Activated CD4-positive, alpha-beta memory T cell treated with anti-CD3 and anti-CD28 coated beads for 36 hours (primary cell): ENCODE measurements at regions of chr16 and their contacts with region 1.

Region 1: GRCh38 chr16:69112285-69113129 is 7.1 kb downstream of the HAS3 start:
- DNase-seq: peak; percentile 69
- H3K4me3 Mint-ChIP-seq: no peak overlapping the region
- H3K27ac Mint-ChIP-seq: no peak overlapping the region
- H3K4me1 Mint-ChIP-seq: peaks cover 3% of the 10 kb centered on the region
- H3K27me3 Mint-ChIP-seq: peaks cover 13% of the 10 kb centered on the region

Region 2: DNA sequence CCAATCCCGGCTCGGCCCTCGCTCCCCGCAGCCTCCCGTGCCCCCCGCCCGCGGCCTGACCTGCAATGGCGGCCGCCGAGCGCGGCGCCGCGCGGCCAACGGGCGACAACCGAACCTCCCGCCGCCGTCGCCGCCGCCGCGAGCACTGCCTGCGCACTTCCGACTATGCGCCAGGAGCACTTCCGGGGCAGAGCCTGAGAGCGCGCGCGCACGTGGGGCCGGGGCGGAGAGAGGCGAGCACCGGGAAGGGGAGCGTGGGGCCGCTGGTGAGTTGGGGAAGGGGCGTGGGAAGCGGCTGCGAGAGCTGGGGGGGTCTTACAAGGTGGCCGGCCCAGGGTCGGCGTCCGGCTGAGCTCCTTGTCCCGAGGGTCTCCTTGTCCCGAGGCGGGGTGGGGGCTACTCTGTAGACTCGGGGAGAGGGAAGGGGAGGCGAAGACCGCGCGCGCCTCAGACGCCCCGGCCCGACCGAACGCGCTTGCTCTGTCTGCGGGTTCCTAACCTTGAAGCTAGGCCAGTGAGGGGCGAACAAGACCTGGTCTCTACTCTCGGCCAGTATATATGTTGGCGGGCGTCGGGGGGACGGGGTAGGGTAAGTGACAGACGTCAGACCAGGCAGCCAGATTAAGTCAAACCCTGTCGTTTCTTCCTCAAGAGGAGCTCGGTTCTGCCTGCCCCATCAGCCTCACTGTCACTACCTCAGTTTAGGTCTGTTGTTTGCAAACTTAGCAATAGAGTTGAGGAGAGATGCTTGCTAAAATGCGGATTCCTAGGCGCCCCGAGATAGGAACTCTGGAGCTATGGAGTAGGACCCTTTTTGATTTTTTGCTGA is 20.1 kb after region 1 on chr16 and contains the starts of genes CHTF8 and UTP4:
- CTCF ChIA-PET with region 1: interaction called, 11 read pairs
- POLR2A ChIA-PET with region 1: no interaction called
- intact Hi-C with region 1: no loop called
- DNase-seq: peak; percentile 91
- H3K4me3 Mint-ChIP-seq: peak within 1 kb of the TSS; percentile 97
- H3K27ac Mint-ChIP-seq: peak within 1 kb of the TSS; percentile 91
- H3K4me1 Mint-ChIP-seq: peaks cover 64% of the 10 kb centered on the region
- H3K27me3 Mint-ChIP-seq: no peaks in the 10 kb centered on the region
- total RNA-seq, gene CHTF8: 120 to 132 TPM
- total RNA-seq, gene UTP4: 104 to 106 TPM